ENCODE measurements at regions of chr12 and their contacts with region 1.

Region 1: DNA sequence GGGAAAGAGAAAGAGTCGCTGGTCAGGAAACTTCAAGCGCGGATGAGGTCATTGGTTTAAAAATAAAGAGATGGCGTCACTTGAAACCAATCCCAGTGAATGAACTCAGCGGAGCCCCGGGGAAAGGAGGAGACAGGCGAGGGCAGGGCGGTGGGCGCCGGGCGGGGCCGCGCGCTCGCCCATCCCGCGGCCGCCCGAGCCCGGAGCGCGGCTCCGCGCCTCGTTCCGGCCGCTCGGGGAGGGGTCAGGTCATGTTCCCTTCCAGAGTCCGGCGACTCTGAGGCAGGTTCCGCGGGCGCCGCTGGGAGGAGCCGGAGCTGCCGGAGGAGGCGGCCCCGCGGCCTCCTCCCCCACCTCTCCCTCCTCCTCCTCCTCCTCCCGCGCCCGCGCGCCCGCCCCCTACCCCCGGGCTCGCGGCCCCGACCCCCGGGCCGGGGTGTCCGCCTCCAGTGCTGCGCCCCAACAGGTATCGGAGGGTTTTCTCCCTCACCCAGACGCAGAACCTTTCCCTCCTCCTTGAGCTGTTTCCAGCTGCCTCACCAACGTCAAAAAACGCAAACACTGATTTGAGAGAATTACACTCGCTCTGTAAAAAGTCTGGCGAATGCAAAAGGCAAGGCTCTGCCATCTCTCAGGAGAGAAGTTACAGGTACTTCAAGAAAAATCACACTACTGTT is at the start of gene DUSP16:
- DNase-seq: peak; percentile 66
- H3K4me3 ChIP-seq: peak within 1 kb of the TSS; percentile 74
- CTCF ChIP-seq: peak; percentile 22

Region 2: DNA sequence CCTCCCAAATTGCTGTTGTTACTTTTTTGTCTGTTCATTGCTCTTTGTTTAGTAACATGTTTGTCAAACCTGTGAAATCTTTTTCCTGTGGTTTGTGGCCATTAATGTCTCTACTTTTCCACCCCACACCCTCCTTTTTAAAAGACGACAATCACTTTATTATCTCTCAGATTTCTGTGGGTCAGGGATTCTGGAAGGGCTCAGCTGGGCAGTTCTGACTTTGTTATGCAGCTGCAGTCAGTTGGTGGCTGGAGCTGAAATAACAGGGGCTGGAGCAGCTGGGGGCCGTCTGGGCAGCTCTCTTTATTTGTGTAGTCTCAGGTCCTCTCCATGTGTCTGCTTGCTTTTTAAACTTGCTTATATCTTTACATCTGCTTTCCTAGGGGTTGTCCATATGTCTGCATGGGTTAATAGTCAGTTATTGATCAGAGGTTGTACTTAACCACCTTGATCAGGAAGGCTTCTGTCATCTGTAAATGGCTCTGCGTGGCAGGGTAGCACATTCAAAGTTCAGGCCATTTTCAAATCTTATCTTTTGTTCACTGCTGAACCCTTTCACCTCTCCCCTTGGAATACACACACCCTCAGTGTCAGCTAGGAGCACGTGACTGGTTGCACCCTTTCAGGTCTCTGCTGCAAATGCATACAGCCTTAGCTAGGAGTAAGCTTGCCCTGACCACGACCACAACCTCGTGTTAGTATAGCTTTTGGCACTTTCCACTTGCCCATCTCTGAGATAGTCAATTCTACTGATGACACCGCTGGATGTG is 178.0 kb before region 1 on chr12:
- CTCF ChIA-PET with region 1: interaction called, 81 read pairs
- POLR2A ChIA-PET with region 1: no interaction called
- DNase-seq: no peak
- H3K4me3 ChIP-seq: no peak overlapping the region
- CTCF ChIP-seq: no peak

Region 3: DNA sequence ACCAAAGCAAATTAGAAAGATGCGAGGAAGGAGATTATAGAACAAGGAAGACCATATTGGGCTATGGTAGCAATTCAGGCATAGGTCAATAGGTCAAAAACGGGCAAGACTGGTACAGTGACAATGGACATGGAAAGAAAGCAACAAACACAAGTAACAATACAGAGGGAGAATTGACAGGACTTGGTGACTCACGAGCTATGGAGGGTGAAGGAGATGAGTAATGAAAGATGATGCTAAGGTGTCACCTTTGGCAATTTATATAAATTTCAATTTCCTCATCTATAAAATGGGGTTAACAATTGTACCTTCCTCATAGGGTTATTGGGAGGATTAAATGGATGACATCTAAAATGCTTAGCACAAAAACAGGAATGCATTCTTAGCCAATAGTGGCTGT is 15.1 kb after region 1 on chr12:
- CTCF ChIA-PET with region 1: interaction called, 27 read pairs
- POLR2A ChIA-PET with region 1: no interaction called
- DNase-seq: no peak
- H3K4me3 ChIP-seq: no peak overlapping the region
- CTCF ChIP-seq: no peak

Region 4: GRCh38 chr12:12592930-12593329 is 30.2 kb after region 1 on chr12:
- CTCF ChIA-PET with region 1: interaction called, 12 read pairs
- POLR2A ChIA-PET with region 1: no interaction called
- DNase-seq: no peak
- H3K4me3 ChIP-seq: no peak overlapping the region
- CTCF ChIP-seq: no peak

Region 5: GRCh38 chr12:12661086-12661485 is 98.4 kb after region 1 on chr12:
- CTCF ChIA-PET with region 1: interaction called, 10 read pairs
- POLR2A ChIA-PET with region 1: no interaction called
- DNase-seq: peak; percentile 65
- H3K4me3 ChIP-seq: no peak overlapping the region
- CTCF ChIP-seq: no peak